Motor neuron (in vitro differentiated cells): ENCODE measurements at regions of chr11 and their contacts with region 1.

Region 1: DNA sequence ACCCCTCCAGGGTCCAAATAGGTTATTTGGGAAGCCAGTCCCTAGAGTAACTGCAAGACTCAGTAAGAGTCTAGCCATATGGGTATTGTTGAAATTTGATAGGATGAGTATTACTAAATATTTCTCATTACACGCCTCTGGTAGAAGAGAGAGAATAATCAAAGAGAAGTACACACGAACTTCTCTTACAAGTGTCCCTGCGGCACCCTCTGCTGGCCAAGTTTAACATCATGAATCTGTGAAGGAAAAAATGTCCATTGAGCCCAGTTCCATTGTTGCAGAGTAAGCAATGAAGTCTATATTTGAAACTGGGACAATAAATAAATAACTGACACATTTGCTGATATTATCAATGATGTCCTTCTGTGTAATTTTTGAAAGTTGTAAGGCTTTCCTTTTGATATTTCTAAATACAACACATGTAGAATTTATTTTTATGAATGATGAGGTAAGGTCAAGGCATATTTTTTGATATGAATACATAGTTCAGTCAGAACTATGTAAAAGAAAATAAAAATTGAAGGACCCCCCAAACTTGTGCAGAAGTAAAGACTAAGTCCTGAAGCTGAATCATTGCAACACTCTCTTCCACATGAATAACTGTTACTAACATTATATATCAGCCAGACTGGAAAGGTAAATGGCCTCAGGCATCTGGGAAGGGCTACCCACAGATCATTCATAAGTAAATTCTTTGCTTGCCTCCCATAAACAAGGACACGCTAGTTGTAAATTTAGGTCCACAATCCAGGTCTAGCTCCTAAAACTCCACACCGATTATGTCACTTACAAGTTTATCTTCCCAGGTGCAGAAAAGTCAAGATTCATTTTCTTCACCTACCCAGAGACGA is 10.0 kb downstream of the OR51L1 start:
- ATAC-seq: peak in 4 of 8 experiments; percentile 49 to 88 (median 82)
- H3K4me3 ChIP-seq: no peak overlapping the region
- H3K27ac ChIP-seq: no peak overlapping the region
- H3K4me1 ChIP-seq: no peaks in the 10 kb centered on the region

Region 2: DNA sequence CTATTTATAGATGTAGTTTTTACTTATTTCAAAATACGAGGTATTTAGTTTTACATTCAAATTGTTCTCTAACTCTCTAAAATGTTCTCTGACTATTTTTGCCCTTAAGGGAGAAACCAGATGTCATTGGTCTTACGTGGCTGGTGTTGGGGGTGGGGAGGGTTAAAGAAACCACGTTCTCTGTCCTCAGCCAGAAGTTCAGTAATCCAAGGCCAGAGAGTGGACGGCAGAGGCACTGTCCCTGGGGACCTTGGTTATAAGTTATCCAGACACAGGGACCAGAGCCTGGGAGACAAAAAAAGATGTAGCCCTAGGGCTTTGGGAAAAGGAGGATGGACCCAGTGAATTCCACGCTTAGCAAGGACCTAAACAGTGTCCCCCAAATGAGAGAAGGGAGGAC is 361.6 kb before region 1 on chr11:
- in situ Hi-C with region 1: loop called in 4 of 9 experiments (anchors 10 to 25 kb)
- ATAC-seq: peak in 3 of 8 experiments; percentile 44 to 54 (median 44)
- H3K4me3 ChIP-seq: no peak overlapping the region
- H3K27ac ChIP-seq: no peak overlapping the region
- H3K4me1 ChIP-seq: no peaks in the 10 kb centered on the region

Region 3: GRCh38 chr11:4957396-4957795 is 47.3 kb before region 1 on chr11:
- in situ Hi-C with region 1: no loop called
- ATAC-seq: no peak
- H3K4me3 ChIP-seq: no peak overlapping the region
- H3K27ac ChIP-seq: no peak overlapping the region
- H3K4me1 ChIP-seq: no peaks in the 10 kb centered on the region